Activated CD4-positive, alpha-beta T cell treated with anti-CD3 and anti-CD28 coated beads, Interleukin-2, amount 10 ng/mL, durations not matched to agents 7 days and 5 days (primary cell): ENCODE measurements at regions of chr1 and their contacts with region 1.

Region 1: GRCh38 chr1:27662707-27663393 is 9.1 kb downstream of the IFI6 start:
- DNase-seq: peak; percentile 93
- H3K4me3 Mint-ChIP-seq: peak overlapping the region; percentile 68
- H3K27ac Mint-ChIP-seq: peak overlapping the region; percentile 98
- H3K4me1 Mint-ChIP-seq: peaks cover 71% of the 10 kb centered on the region
- H3K27me3 Mint-ChIP-seq: no peaks in the 10 kb centered on the region

Region 2: GRCh38 chr1:27616441-27616840 is 46.4 kb before region 1 on chr1:
- CTCF ChIA-PET with region 1: interaction called, 25 read pairs
- POLR2A ChIA-PET with region 1: interaction called, 3 read pairs
- DNase-seq: no peak
- H3K4me3 Mint-ChIP-seq: no peak overlapping the region
- H3K27ac Mint-ChIP-seq: no peak overlapping the region
- H3K4me1 Mint-ChIP-seq: peaks cover 51% of the 10 kb centered on the region
- H3K27me3 Mint-ChIP-seq: no peaks in the 10 kb centered on the region

Region 3: DNA sequence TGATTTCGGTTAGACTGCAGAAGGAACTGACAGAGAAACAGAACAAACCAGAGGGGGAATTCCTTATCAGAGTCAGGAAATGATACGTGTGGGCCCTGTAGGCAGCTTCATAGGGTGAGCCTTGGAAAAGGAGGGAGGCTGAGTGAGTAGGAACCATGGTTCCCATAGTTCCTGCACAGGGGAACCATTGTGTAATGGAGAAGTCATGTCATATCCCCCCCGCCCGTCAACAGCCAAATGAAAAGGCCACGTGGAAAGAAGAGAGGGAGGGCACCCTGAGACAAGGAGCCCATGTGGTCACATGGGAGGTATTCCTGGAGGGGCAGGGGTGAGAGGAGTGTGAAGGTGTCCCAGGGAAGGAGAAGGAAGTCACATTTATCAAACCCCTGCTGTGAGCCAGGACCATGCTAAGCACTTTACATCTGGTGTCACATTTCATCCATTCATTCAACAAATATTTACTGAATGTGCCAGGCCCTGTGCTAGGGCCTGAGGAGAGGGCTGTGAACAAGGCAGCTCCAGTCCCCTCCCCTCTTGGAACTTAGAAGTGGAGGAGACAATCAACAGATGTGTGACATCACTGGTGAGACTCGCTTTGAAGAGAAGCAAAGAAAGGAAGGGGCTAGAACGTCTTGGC is 12.2 kb before region 1 on chr1:
- CTCF ChIA-PET with region 1: interaction called, 14 read pairs
- POLR2A ChIA-PET with region 1: no interaction called
- DNase-seq: no peak
- H3K4me3 Mint-ChIP-seq: no peak overlapping the region
- H3K27ac Mint-ChIP-seq: no peak overlapping the region
- H3K4me1 Mint-ChIP-seq: peaks cover 19% of the 10 kb centered on the region
- H3K27me3 Mint-ChIP-seq: no peaks in the 10 kb centered on the region

Region 4: GRCh38 chr1:27830621-27831424 is 168.0 kb after region 1 on chr1 and contains the start of gene PPP1R8:
- CTCF ChIA-PET with region 1: no interaction called
- POLR2A ChIA-PET with region 1: no interaction called
- DNase-seq: peak; percentile 90
- H3K4me3 Mint-ChIP-seq: peak within 1 kb of the TSS; percentile 95
- H3K27ac Mint-ChIP-seq: peak within 1 kb of the TSS; percentile 91
- H3K4me1 Mint-ChIP-seq: peaks cover 36% of the 10 kb centered on the region
- H3K27me3 Mint-ChIP-seq: no peaks in the 10 kb centered on the region
- total RNA-seq, gene PPP1R8: 55.8 to 57.5 TPM